Heart right ventricle (tissue), 16 donors: ENCODE measurements at regions of chr13 and their contacts with region 1.

Region 1: DNA sequence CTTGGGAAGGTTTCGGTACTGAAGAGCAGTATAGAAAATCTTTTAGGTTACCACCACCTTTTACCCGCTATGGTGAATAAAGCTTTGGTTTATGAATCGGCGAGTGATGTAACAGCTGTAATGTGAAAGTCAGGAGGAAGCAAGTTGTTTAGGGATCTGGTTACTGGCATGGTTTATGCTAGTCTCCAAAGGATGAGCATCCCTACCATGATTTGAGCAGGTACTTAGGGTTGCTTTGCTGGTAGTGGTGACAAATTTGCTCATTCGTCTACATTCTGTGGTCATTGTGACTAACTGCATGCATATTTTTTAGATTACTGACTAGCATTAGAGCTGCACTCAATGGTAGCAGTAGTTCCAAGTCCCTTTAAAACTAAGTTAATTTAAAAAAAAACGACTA is 104.1 kb downstream of the FRY start:
- DNase-seq: no peak
- ATAC-seq: no peak
- H3K4me3 ChIP-seq: no peak overlapping the region
- H3K27ac ChIP-seq: peak overlapping the region in 6 of 10 donors; percentile 2 to 74 (median 46)
- H3K4me1 ChIP-seq: peaks cover 0 to 55% (median 30%) of the 10 kb centered on the region in 9 donors
- H3K27me3 ChIP-seq: no peaks in the 10 kb centered on the region
- CTCF ChIP-seq: no peak

Region 2: DNA sequence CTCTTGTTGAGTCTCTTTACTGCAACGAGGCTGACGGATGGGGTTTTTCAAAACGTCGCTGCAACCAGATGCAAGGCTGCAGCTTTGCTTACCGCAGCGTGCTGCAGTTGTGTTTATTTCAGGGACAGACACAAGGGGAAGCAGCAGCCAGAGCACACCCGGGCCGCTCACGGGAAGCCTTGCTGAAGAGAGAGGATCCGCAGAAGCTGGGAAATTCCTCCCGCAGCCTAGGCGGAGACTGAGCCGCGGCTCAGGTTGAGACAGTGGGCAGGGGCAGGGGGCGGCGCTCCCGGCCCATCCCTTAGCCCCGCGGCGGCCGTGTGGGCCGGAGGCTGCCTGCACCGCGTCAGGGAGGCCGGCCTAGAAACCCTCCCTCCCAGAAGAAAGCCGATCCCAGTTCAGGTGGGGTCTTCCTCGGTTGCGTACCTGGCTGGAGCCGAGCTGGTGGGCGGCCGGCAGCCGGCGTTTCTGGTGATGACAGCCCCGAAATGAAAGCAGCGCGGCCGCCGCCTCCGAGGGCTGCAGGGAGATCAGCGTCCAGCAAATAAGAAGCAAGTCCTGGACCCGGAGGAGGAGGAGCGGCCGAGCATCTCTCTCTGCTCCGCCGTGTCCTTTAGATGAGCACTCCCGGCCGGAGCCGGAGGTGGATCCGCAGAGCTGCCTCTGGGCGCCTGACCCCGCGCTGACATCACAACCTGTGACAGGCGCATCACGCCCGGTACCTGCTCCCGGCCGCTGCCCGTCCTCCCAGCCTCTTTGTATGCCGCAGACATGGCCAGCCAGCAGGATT is 104.4 kb before region 1 on chr13 and contains the start of gene FRY:
- intact Hi-C with region 1: loop called in 1 of 10 experiments (anchors 10 kb)
- DNase-seq: peak; percentile 70
- ATAC-seq: peak; percentile 81 to 89 (median 88)
- H3K4me3 ChIP-seq: peak within 1 kb of the TSS; percentile 47 to 76 (median 70)
- H3K27ac ChIP-seq: peak within 1 kb of the TSS in 9 of 10 donors; percentile 61 to 83 (median 76)
- H3K4me1 ChIP-seq: peaks cover 0 to 34% (median 9%) of the 10 kb centered on the region in 9 donors
- H3K27me3 ChIP-seq: no peaks in the 10 kb centered on the region
- CTCF ChIP-seq: peak in 4 of 9 donors; percentile 20 to 37 (median 27)
- total RNA-seq, gene FRY: 111 to 268 (median 241) TPM

Region 3: GRCh38 chr13:32060401-32060878 is 75.2 kb before region 1 on chr13:
- intact Hi-C with region 1: no loop called
- DNase-seq: peak in 1 of 2 donors; percentile 11
- ATAC-seq: peak; percentile 73 to 95 (median 90)
- H3K4me3 ChIP-seq: peak overlapping the region in 3 of 10 donors; percentile 29 to 46 (median 40)
- H3K27ac ChIP-seq: peak overlapping the region; percentile 24 to 86 (median 74)
- H3K4me1 ChIP-seq: peaks cover 0 to 67% (median 29%) of the 10 kb centered on the region in 9 donors
- H3K27me3 ChIP-seq: no peaks in the 10 kb centered on the region
- CTCF ChIP-seq: no peak